ENCODE measurements at regions of chr12 and their contacts with region 1.

Region 1: GRCh38 chr12:58346032-58346632 is 404.8 kb downstream of the ATP23 start:
- DNase-seq: no peak
- H3K4me3 Mint-ChIP-seq: no peak overlapping the region
- H3K27ac Mint-ChIP-seq: no peak overlapping the region
- H3K4me1 Mint-ChIP-seq: no peaks in the 10 kb centered on the region
- H3K27me3 Mint-ChIP-seq: peaks cover 6% of the 10 kb centered on the region

Region 2: GRCh38 chr12:57983146-57983857 is 362.8 kb before region 1 on chr12:
- CTCF ChIA-PET with region 1: no interaction called
- intact Hi-C with region 1: no loop called
- DNase-seq: peak; percentile 63
- H3K4me3 Mint-ChIP-seq: no peak overlapping the region
- H3K27ac Mint-ChIP-seq: no peak overlapping the region
- H3K4me1 Mint-ChIP-seq: no peaks in the 10 kb centered on the region
- H3K27me3 Mint-ChIP-seq: peaks cover 7% of the 10 kb centered on the region

Region 3: DNA sequence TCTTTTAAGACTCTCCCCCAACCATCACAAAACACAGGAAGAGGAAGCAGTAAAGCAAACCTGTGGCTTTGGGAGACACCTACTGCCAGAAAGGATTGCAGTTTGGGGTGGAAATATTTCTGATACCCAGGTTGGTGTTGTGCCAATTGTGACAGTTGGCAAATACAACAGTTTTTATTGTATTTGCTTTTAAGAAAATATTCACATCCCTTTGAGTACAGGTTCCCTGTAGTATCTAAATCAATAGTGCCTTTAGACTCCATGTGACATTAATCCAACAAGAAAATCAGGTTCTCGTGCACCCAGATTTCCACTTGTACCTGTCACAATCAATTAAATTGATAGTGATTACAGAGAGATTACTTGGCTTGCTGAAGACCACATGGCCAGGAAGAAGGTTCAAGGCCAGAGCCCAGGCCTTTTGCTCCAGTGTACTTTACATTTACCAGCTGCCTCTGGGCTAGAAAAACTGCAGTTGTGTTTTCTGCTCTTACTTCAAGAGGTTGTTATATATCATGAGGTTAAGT is 43.6 kb before region 1 on chr12:
- CTCF ChIA-PET with region 1: no interaction called
- intact Hi-C with region 1: no loop called
- DNase-seq: no peak
- H3K4me3 Mint-ChIP-seq: no peak overlapping the region
- H3K27ac Mint-ChIP-seq: no peak overlapping the region
- H3K4me1 Mint-ChIP-seq: no peaks in the 10 kb centered on the region
- H3K27me3 Mint-ChIP-seq: no peaks in the 10 kb centered on the region

Region 4: DNA sequence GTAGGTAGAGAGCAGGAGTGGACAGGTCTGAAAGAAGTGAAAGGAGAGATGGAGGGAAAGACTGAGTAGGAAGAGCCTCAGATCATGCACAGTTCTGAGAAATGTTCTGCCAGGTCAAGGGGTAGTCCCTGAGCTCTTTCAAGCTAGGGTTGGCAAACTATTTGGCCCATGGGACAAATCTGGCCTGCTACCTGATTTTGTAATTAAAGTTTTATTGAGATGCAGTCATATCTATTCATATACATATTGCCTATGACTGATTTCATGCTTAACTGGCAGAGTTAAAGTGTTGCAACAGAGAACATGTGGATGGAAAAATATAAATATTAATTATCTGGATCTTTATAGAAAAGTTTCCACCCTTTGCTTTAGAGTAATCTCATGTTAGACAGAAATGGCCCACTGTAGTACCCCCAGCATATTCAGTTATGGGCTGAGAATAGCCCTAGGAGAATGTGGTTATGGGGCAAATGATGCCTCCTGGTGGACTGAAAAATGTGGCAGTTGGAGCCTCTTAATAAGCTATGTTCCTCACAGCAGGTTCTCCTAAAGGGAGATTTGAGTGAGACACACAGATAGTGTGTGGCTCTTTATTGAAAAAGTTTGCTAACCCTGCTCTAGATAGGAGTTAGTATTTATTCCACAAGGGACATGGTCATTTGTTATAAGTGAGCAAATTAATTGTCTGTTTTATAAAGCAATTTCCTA is 97.3 kb after region 1 on chr12:
- CTCF ChIA-PET with region 1: interaction called, 3 read pairs
- intact Hi-C with region 1: loop called (anchors 1 kb)
- DNase-seq: peak; percentile 22
- H3K4me3 Mint-ChIP-seq: no peak overlapping the region
- H3K27ac Mint-ChIP-seq: no peak overlapping the region
- H3K4me1 Mint-ChIP-seq: no peaks in the 10 kb centered on the region
- H3K27me3 Mint-ChIP-seq: no peaks in the 10 kb centered on the region

Region 5: DNA sequence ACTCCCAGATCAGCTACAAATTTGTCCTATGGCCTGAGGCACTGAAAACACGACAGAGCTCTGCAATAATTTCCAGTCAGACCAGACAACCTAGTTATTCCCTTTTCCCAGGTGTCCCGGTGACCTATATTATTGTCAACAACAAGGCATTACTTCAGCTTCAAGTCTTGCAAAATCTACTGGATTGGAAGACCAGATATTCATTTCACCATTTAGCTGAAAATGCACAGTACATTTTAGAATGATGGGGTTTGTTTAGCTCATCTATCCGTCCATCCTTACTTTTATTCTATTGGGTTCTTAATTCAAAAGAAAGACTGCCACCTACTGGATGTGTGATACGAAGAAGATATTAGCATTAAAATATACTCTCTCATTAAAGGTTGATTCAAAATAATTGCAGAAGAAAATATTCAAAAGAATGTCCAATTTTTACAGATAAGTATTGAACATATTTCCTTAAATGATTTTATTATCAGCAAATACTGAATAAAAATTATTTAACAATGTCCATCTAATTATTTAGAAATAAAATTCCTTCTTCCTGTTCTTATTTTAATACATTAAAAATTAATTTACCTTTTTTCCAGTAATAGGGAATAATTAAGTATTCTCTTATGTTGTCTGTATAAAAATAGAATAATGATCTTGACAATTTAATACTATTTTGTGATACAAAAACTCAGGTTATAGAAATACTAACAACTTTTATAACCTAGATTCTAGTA is 819.0 kb after region 1 on chr12:
- CTCF ChIA-PET with region 1: no interaction called
- intact Hi-C with region 1: loop called (anchors 5 kb)
- DNase-seq: no peak
- H3K4me3 Mint-ChIP-seq: no peak overlapping the region
- H3K27ac Mint-ChIP-seq: no peak overlapping the region
- H3K4me1 Mint-ChIP-seq: no peaks in the 10 kb centered on the region
- H3K27me3 Mint-ChIP-seq: peaks cover 6% of the 10 kb centered on the region